ENCODE measurements at regions of chr17 and their contacts with region 1.

Region 1: GRCh38 chr17:56715613-56716357 is 117.9 kb downstream of the C17orf67 start:
- DNase-seq: peak; percentile 97
- ATAC-seq: peak; percentile 96
- H3K4me3 ChIP-seq: no peak overlapping the region
- H3K27ac ChIP-seq: no peak overlapping the region
- H3K4me1 ChIP-seq: peaks cover 8% of the 10 kb centered on the region; the same call in 1 of the 2 replicates
- H3K27me3 ChIP-seq: no peaks in the 10 kb centered on the region
- CTCF ChIP-seq: peak; percentile 95

Region 2: GRCh38 chr17:56471696-56472095 is 244.1 kb before region 1 on chr17:
- CTCF ChIA-PET with region 1: no interaction called
- POLR2A ChIA-PET with region 1: no interaction called
- intact Hi-C with region 1: no loop called
- DNase-seq: no peak
- ATAC-seq: no peak
- H3K4me3 ChIP-seq: no peak overlapping the region
- H3K27ac ChIP-seq: no peak overlapping the region
- H3K4me1 ChIP-seq: no peaks in the 10 kb centered on the region
- H3K27me3 ChIP-seq: peaks cover 53% of the 10 kb centered on the region
- CTCF ChIP-seq: no peak

Region 3: GRCh38 chr17:56499799-56500388 is 215.9 kb before region 1 on chr17:
- CTCF ChIA-PET with region 1: interaction called, 28 read pairs
- POLR2A ChIA-PET with region 1: no interaction called
- intact Hi-C with region 1: loop called (anchors 2 kb)
- DNase-seq: peak; percentile 73
- ATAC-seq: no peak; the same call in 1 of the 2 replicates
- H3K4me3 ChIP-seq: no peak overlapping the region
- H3K27ac ChIP-seq: no peak overlapping the region
- H3K4me1 ChIP-seq: 0 out of 2 replicates have a peak, but pooled peaks cover 1% of the 10 kb centered on the region
- H3K27me3 ChIP-seq: peaks cover 32% of the 10 kb centered on the region
- CTCF ChIP-seq: peak; percentile 86

Region 4: GRCh38 chr17:56629531-56630075 is 86.2 kb before region 1 on chr17:
- CTCF ChIA-PET with region 1: interaction called, 11 read pairs
- POLR2A ChIA-PET with region 1: no interaction called
- intact Hi-C with region 1: no loop called
- DNase-seq: peak; percentile 71
- ATAC-seq: peak; percentile 97
- H3K4me3 ChIP-seq: no peak overlapping the region; the same call in 1 of the 2 replicates
- H3K27ac ChIP-seq: no peak overlapping the region
- H3K4me1 ChIP-seq: peaks cover 11% of the 10 kb centered on the region; the same call in 1 of the 2 replicates
- H3K27me3 ChIP-seq: no peaks in the 10 kb centered on the region
- CTCF ChIP-seq: peak; percentile 70

Region 5: DNA sequence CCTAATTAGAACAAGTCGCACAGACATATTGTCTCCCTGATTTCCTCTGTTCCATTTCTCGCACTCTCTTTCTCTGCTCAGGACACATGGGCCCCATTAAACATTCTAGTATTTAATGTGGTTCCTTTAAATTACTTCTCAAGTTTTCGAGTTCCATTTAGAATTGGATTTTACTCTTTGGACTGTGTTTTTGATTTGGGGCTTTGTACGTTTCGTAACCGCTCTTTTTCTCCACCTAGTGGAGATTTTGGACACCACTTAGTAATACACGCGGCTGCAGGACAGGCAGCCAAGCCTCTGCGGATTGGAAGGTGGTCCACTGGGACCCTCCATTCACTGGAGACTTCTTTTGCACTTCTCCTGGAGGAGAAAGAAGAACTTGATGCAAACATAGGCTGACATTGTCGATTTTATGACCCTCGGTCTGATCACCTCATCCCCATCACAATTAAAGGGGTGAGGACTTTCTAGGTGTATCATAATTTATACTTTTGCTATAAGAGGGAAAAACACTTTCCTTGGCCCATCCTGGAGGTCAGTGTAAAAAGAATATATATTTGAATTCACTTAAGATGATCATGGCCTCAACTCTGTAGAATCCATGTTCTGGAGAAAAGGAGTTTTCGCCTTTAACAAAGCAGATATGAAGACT is 36.5 kb before region 1 on chr17:
- CTCF ChIA-PET with region 1: interaction called, 55 read pairs
- POLR2A ChIA-PET with region 1: interaction called, 4 read pairs
- intact Hi-C with region 1: loop called (anchors 1 kb)
- DNase-seq: peak; percentile 68
- ATAC-seq: peak; percentile 45
- H3K4me3 ChIP-seq: peak overlapping the region; percentile 19; the same call in 1 of the 2 replicates
- H3K27ac ChIP-seq: peak overlapping the region; percentile 61
- H3K4me1 ChIP-seq: peaks cover 71% of the 10 kb centered on the region
- H3K27me3 ChIP-seq: no peaks in the 10 kb centered on the region
- CTCF ChIP-seq: peak; percentile 95

Region 6: DNA sequence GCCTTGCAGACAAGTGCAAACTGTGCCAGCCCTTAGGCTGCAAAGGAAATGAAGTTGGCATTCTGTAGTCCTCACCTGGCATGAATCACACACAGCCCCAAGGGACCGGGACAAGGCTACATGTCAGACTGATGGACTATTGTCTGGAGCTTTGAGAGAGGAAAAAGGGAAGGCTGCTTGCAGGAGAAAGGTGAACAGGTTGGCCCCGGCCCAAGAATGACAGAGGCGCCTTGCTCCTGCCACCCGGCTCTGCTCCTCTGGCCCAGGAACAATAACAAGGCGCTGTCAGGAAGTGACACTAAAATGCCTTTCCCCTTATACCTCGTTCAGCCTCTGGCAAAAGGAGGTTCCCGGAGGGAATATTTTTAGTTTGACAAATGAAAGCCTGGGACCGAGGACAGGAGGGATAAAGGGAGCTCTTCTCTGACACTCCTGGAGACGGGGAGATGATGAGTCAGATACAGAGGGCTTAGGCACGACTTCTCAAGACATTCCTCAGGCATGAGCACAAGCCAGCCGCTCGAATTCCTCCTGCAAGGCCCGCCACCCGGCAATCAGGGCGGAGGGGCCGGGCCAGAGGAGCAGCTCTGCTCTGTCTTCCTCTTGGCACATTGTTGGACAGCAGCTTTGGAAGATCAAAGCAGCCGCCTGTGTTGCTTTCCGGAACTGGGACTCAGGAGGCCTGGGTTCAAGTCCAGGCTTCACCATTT is 16.4 kb before region 1 on chr17:
- CTCF ChIA-PET with region 1: interaction called, 26 read pairs
- POLR2A ChIA-PET with region 1: interaction called, 4 read pairs
- intact Hi-C with region 1: loop called (anchors 1 kb)
- DNase-seq: peak; percentile 100
- ATAC-seq: peak; percentile 95
- H3K4me3 ChIP-seq: peak overlapping the region; percentile 46; the same call in 1 of the 2 replicates
- H3K27ac ChIP-seq: peak overlapping the region; percentile 90
- H3K4me1 ChIP-seq: peaks cover 23% of the 10 kb centered on the region
- H3K27me3 ChIP-seq: no peaks in the 10 kb centered on the region
- CTCF ChIP-seq: no peak